ENCODE measurements at regions of chr22 and their contacts with region 1.

Region 1: DNA sequence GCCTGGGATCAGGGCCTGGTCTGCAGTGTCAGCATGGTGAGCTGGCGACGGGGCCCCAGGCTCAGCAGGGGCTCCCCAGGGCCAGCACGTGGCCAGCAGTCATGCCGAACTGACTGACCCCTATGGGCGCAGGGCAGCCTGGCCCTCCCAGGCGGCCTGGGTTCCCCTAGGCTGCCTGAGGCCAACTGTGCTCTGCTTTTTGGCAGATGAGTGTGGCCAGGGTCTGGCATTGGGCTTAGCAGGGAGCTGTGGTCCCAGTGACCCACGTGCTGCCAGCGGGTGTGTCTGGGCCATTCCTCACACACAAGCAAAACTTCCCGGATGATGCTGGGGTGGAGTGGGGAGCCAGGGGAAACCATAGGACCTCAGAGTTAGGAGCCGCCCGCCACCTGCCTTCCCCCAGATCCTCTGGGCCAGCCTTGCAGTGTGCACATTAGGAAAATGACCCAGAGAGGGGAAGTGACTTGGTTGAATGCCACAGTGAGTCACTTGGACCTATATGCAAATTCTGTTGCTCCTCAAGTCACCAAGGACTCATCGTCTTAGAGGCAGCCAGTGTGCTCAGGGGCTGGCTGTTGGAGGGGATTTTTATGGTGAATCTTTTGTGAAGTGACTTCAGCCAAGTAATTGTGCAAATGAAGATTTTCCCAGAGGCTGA is 6.5 kb downstream of the ADORA2A start:
- DNase-seq: peak; percentile 90
- ATAC-seq: peak; percentile 75
- H3K4me3 ChIP-seq: peak overlapping the region in 4 of 5 experiments; percentile 20 to 35 (median 25)
- H3K4me3 Mint-ChIP-seq: peak overlapping the region; percentile 80
- H3K27ac ChIP-seq: peak overlapping the region; percentile 98 to 99
- H3K27ac Mint-ChIP-seq: peak overlapping the region; percentile 97
- H3K4me1 ChIP-seq: peaks cover 98 to 100% of the 10 kb centered on the region in 2 donors
- H3K4me1 Mint-ChIP-seq: peaks cover 95% of the 10 kb centered on the region
- H3K27me3 ChIP-seq: no peaks in the 10 kb centered on the region
- H3K27me3 Mint-ChIP-seq: no peaks in the 10 kb centered on the region
- CTCF ChIP-seq: no peak

Region 2: DNA sequence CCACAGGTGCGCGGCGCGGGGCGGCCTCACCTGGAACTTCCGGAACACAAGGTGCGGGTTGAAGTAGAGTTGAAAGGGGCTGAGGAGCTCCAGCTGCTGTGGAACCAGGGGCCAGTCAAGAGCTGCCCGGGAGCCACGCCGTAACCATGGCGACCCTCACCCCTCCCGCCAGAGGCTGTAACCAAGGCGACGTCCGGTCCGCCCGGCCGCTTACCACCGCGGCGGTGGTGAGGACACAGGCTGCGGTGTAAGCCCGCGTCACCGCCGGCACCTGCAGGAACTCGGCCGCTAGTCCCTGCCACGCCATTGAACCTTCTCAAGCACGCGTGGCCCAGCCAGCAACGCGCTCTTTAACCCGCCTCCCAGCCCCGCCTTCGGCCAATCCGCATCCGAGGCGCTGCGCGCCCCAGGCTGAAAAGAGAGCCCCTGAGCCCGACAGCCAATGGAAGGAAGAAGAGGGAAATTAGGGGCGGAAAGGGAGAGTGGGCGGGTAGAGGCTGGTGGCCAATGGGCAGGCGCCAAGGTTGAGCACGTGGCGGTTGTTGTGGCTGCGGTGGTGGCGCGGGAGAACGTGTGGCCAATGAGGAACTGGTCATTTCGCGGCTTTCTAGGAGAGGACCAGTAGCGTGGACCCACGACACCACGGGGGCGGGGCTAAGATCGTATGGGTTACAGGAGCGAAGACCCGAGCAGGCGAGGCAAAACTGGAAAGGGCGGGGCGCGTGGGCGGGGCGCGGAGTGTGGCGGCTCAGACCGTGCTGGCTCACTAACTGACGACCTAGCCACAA is 595.1 kb before region 1 on chr22 and contains the start of gene DERL3:
- CTCF ChIA-PET with region 1: no interaction called
- POLR2A ChIA-PET with region 1: no interaction called
- intact Hi-C with region 1: loop called (anchors 10 kb)
- DNase-seq: peak; percentile 100
- ATAC-seq: peak; percentile 78
- H3K4me3 ChIP-seq: peak within 1 kb of the TSS; percentile 38 to 83 (median 69)
- H3K4me3 Mint-ChIP-seq: peak within 1 kb of the TSS; percentile 89
- H3K27ac ChIP-seq: peak within 1 kb of the TSS; percentile 98
- H3K27ac Mint-ChIP-seq: peak within 1 kb of the TSS; percentile 99
- H3K4me1 ChIP-seq: peaks cover 45 to 60% of the 10 kb centered on the region in 2 donors
- H3K4me1 Mint-ChIP-seq: peaks cover 73% of the 10 kb centered on the region
- H3K27me3 ChIP-seq: no peaks in the 10 kb centered on the region
- H3K27me3 Mint-ChIP-seq: no peaks in the 10 kb centered on the region
- CTCF ChIP-seq: no peak
- total RNA-seq, gene DERL3: 74.1 and 77.0 TPM in 2 replicates

Region 3: DNA sequence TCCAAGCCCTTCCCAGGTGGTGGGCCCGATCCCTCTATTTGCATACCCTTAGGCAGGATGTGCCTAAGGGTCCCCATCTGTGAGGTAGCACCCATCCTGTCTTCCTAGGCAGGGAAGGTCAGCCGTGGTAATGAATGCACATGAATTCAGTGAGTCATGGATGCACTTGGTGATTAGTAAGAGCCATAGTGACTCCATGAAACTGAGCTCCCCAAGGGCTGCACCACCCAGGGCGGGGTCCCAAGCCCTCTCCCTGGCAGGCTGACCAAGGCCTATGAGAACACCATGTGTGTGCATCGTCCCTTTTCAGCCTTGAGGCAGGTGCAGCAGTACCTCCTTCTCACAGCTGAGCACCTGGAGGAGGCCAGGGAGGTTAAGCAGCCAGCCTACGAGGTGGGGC is 268.3 kb before region 1 on chr22:
- CTCF ChIA-PET with region 1: no interaction called
- POLR2A ChIA-PET with region 1: no interaction called
- intact Hi-C with region 1: no loop called
- DNase-seq: no peak
- ATAC-seq: no peak
- H3K4me3 ChIP-seq: no peak overlapping the region
- H3K4me3 Mint-ChIP-seq: no peak overlapping the region
- H3K27ac ChIP-seq: no peak overlapping the region
- H3K27ac Mint-ChIP-seq: no peak overlapping the region
- H3K4me1 ChIP-seq: peaks cover 0 to 8% of the 10 kb centered on the region in 2 donors
- H3K4me1 Mint-ChIP-seq: peaks cover 9% of the 10 kb centered on the region
- H3K27me3 ChIP-seq: no peaks in the 10 kb centered on the region
- H3K27me3 Mint-ChIP-seq: no peaks in the 10 kb centered on the region
- CTCF ChIP-seq: no peak

Region 4: DNA sequence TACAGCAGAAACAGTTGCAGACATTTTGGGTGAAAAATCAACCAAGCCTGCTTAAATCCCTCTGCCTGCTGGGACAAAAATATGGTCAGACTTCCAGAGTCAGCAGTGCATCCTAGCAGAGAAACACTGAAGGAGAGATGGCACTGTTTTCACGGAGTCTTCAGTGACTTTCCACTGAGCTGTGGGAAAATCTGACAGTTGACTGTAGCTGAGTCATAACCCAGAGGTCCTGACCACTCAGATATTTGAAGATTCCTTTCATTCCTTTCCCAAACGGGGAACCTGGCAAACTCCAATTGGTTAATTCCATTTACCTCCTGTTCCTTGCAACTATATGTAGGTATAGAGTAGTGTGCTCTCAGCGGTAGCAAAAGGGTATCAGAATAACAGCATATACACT is 40.3 kb after region 1 on chr22:
- CTCF ChIA-PET with region 1: interaction called, 3 read pairs
- POLR2A ChIA-PET with region 1: no interaction called
- intact Hi-C with region 1: loop called (anchors 5 kb)
- DNase-seq: no peak
- ATAC-seq: no peak
- H3K4me3 ChIP-seq: no peak overlapping the region
- H3K4me3 Mint-ChIP-seq: no peak overlapping the region
- H3K27ac ChIP-seq: no peak overlapping the region
- H3K27ac Mint-ChIP-seq: no peak overlapping the region
- H3K4me1 ChIP-seq: peaks cover 9 to 17% of the 10 kb centered on the region in 2 donors
- H3K4me1 Mint-ChIP-seq: peaks cover 16% of the 10 kb centered on the region
- H3K27me3 ChIP-seq: no peaks in the 10 kb centered on the region
- H3K27me3 Mint-ChIP-seq: no peaks in the 10 kb centered on the region
- CTCF ChIP-seq: no peak

Region 5: DNA sequence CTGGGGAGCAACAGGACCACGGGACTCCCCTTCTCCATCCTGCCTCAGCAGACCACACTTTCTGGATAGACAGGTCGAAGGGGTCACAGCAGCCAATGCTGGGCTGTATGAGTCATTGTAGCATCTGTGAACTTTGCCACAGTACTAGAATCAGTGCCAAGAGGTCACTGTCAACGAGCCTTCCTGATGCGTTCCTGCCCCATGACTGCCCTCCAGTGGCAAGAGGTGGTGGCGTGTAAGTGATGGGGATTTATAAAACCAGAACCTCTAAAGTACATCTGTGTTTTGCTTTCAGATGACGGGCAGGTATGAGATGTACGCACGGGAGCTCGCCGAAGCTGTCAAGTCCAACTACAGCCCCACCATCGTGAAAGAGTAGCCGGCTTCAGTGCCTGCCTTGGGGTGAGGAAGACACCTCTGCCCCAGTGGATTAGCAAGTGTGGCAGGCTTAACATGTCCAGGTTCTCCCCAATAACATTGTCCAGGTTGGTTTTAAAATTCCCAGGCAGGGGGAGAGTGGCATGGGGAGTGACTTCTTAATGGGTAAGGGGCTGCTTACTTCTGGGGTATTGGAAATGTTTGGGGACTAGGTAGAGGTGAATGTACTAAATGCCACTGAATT is 91.6 kb after region 1 on chr22:
- CTCF ChIA-PET with region 1: interaction called, 157 read pairs
- POLR2A ChIA-PET with region 1: interaction called, 3 read pairs
- intact Hi-C with region 1: no loop called
- DNase-seq: peak; percentile 86
- ATAC-seq: peak; percentile 93
- H3K4me3 ChIP-seq: no peak overlapping the region
- H3K4me3 Mint-ChIP-seq: no peak overlapping the region
- H3K27ac ChIP-seq: no peak overlapping the region
- H3K27ac Mint-ChIP-seq: peak overlapping the region; percentile 16
- H3K4me1 ChIP-seq: peaks cover 12 to 16% of the 10 kb centered on the region in 2 donors
- H3K4me1 Mint-ChIP-seq: peaks cover 17% of the 10 kb centered on the region
- H3K27me3 ChIP-seq: no peaks in the 10 kb centered on the region
- H3K27me3 Mint-ChIP-seq: no peaks in the 10 kb centered on the region
- CTCF ChIP-seq: peak; percentile 84

Region 6: DNA sequence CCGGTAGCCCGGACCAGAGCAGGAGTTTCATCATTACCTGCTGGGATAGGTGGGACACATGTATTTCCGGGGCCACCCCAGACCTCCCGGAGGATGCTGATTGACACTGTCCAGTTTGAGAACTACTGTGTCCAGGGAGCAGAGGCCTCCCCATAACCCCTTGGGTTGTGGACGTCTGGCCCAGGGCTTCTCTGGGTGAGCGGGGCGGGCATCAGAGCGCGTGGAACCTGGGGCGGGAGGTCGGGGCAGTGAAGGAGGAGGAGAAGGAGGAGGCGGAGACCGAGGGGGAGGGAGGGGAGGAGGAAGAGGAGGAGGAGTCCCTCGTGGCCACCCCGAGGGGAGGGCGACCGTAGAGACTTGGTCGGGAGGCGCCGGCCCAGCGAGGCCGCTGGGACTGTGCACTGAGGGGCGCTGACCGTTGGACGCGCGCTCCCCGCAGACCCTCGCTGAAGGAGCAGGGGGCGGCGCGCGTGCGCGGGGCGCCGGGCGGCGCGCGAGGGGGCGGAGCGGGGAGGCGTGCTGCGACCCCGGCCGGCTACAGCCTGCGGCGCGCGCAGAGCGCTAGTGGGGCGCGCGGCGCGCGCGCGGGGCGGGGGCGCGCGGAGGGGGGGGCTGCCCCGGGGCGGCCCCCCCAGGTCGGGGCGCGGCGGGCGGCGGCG is 1130.5 kb after region 1 on chr22 and contains the start of gene GRK3:
- CTCF ChIA-PET with region 1: no interaction called
- POLR2A ChIA-PET with region 1: no interaction called
- intact Hi-C with region 1: loop called (anchors 10 kb)
- DNase-seq: peak; percentile 89
- ATAC-seq: peak; percentile 61
- H3K4me3 ChIP-seq: peak within 1 kb of the TSS; percentile 71 to 95 (median 84)
- H3K4me3 Mint-ChIP-seq: peak within 1 kb of the TSS; percentile 94
- H3K27ac ChIP-seq: peak within 1 kb of the TSS; percentile 91 to 97
- H3K27ac Mint-ChIP-seq: peak within 1 kb of the TSS; percentile 95
- H3K4me1 ChIP-seq: peaks cover 51 to 61% of the 10 kb centered on the region in 2 donors
- H3K4me1 Mint-ChIP-seq: peaks cover 74% of the 10 kb centered on the region
- H3K27me3 ChIP-seq: no peaks in the 10 kb centered on the region
- H3K27me3 Mint-ChIP-seq: no peaks in the 10 kb centered on the region
- CTCF ChIP-seq: no peak
- total RNA-seq, gene GRK3: 61.0 and 65.3 TPM in 2 replicates

Measured in B cell (primary cell).